GM10248 (cell line): ENCODE measurements at regions of chr9 and their contacts with region 1.

Region 1: DNA sequence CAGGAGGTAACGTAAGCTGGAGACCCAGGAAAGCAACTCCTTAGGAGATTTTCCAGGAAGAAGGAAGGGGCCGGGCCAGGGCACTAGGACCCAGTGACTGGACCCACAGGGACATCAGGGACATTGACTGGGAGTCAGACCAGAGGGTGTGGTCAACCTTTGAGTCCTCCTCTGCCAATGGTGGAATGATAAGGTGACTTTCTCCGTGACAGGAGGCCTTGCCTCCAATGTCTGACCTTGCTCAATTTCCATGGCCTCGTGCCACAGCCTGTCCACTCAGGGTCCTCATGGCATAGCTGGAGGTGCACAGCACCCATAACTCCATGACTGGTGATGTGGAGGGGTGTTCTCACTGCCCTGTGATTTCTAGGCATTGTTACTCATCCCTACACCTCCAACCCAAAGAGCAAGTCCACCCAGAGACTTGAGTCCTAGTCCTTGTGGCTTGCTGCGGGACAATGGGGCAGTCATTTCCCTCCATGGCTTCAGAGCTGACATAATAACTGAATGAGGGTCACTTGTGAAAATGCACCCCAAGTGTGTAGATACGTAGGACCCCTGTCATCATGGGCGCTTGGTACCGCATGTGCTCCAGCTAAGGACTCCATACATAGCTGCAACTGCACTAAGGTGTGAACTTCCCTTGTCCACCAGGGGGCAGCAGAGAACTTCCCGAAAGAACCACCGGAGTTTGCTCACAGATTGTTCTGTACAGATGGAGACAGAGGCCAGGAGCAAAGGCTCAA is 4.1 kb upstream of the AMBP start:
- DNase-seq: peak; percentile 82
- CTCF ChIP-seq: peak; percentile 85

Region 2: GRCh38 chr9:113932906-113933584 is 149.1 kb before region 1 on chr9:
- CTCF ChIA-PET with region 1: no interaction called
- POLR2A ChIA-PET with region 1: no interaction called
- DNase-seq: no peak
- CTCF ChIP-seq: no peak

Region 3: DNA sequence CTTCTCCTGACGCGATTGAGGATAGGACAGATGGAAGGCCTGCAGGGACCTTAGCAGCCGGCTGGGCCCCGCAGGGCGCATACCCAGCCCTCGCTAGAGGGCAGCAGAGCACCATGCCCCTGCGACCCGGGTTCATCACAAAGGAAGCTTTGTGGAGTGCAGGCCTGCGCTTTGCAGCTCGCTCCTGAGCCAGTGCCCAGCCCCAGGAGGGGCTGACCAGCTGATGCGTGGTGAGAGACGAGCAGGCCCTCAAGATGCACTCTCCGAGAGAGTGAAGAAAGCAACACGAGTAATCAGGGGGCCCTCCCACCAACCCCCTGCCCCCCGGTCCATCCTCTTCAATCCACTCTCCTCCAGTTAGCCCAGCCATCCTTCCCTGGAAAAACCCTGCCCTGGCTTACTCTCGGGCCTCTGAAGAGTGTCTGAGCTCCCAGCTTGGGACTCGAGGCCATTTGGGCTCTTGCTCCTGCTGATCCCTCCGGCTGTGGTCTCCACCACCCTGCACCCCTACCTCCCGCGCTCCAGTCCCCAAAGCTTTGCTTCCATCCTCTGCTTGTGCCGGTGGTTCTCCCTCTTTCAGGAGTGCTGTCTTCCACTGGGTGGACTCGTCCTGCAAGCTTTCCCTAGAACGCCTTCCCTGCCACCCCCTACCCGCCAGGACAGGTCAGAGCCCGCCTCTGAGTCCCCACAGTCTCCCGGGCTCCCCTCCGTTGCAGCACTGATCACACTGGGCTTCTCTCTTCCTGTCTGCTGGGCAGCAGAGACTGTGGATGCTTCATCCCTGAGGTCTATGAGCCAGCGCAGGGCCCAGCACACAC is 26.0 kb after region 1 on chr9:
- CTCF ChIA-PET with region 1: interaction called, 35 read pairs
- POLR2A ChIA-PET with region 1: no interaction called
- DNase-seq: peak; percentile 73
- CTCF ChIP-seq: peak; percentile 76

Region 4: DNA sequence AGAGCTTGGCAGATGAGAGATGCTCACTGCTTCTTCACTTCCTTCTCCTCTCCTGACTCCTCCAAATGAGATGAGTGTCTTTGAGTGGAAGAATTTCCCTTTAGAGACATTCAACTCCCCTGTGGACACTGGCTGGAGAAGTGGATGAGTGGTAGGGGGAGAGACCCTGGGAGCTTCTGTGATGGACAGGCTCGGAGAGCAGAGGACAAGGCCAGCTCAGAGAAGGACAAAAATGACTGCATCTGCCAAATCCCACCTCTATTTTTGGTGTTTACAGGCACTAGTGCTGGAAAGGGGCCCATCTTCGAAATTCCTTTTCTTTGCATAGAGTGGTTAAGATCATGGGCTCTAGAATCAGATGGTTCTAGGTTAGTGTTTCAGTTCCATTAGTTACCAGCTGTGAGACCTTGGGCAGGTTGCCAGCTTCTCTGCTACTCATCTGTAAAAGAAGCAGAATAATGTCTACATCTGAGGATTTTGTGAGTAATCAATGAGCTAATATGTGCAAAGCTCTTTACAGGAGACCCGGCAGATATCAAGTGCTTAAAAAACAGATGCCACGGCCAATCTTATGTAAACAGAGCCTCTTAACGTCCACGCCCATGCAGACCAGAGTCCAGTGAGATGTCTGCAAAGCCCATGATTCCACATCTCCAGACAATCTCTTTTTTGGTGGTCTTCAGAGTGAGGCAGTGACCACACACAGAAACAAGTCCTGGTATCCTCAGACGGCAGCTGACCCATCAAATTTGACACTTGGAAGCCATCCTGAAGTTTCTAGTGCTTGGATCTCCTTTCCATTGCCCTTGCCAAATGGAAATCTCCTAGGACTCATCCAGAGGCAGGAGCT is 59.6 kb after region 1 on chr9:
- CTCF ChIA-PET with region 1: interaction called, 11 read pairs
- POLR2A ChIA-PET with region 1: no interaction called
- DNase-seq: no peak
- CTCF ChIP-seq: no peak

Region 5: DNA sequence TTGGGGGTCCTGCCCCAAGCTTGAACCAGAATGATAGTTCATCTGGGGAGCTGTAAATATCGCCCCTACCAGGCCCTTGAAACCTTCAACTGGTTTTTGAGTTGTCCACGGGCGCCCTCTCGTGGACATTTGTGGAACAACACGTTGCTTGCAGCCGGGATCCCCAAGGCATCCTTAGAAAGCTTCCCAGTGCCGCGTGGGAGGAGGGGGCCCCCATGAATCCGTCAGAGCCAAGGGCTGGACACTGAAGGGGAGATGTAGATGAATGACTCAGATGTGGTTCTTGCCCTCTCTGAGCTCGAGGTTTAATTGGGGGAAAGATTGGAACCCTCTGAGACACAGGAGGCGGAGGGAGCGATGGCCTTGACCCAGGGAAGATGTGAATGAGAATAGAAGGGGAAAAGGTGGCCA is 208.9 kb after region 1 on chr9:
- CTCF ChIA-PET with region 1: interaction called, 80 read pairs
- POLR2A ChIA-PET with region 1: no interaction called
- DNase-seq: peak; percentile 76
- CTCF ChIP-seq: peak; percentile 93

Region 6: GRCh38 chr9:114308411-114308811 is 226.2 kb after region 1 on chr9:
- CTCF ChIA-PET with region 1: interaction called, 10 read pairs
- POLR2A ChIA-PET with region 1: no interaction called
- DNase-seq: no peak
- CTCF ChIP-seq: no peak